ENCODE measurements at regions of chr2 and their contacts with region 1.

Region 1: DNA sequence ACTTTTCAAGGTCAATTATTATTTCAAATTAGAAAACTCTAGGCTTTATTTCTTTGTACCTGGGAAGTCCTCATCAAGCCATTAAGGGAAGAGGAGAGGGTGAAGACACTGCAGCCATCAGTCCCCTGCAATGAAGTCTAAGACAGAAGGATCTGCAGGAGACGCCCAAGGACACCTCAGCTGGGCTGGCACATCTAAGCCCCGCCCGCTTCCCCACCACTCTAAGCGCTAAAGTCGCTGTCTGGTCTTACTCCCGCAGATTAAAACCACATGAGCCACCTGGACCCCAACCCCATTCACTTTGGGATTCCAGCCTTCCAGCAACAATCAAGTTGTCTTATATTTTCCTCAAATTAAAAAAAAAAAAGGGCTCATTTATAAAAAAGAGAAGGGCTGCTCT is 104.4 kb downstream of the AFF3 start:
- DNase-seq: no peak
- ATAC-seq: no peak
- H3K4me3 ChIP-seq: no peak overlapping the region
- H3K27ac ChIP-seq: no peak overlapping the region
- H3K4me1 ChIP-seq: no peaks in the 10 kb centered on the region
- H3K27me3 ChIP-seq: peaks cover 41% of the 10 kb centered on the region
- CTCF ChIP-seq: no peak
- POLR2A ChIP-seq: no peak
- RAD21 ChIP-seq: no peak

Region 2: GRCh38 chr2:99984799-99985515 is 53.1 kb before region 1 on chr2:
- CTCF ChIA-PET with region 1: no interaction called
- POLR2A ChIA-PET with region 1: no interaction called
- RAD21 ChIA-PET with region 1: no interaction called
- intact Hi-C with region 1: loop called (anchors 5 kb)
- DNase-seq: no peak
- ATAC-seq: no peak
- H3K4me3 ChIP-seq: no peak overlapping the region
- H3K27ac ChIP-seq: no peak overlapping the region
- H3K4me1 ChIP-seq: no peaks in the 10 kb centered on the region
- H3K27me3 ChIP-seq: peaks cover 53% of the 10 kb centered on the region
- CTCF ChIP-seq: no peak
- POLR2A ChIP-seq: no peak
- RAD21 ChIP-seq: no peak

Measured in HCT116 (cell line).